ENCODE measurements at regions of chr13 and their contacts with region 1.

Region 1: GRCh38 chr13:25180775-25181537 is 8.9 kb upstream of the AMER2 start:
- DNase-seq: peak; percentile 84
- ATAC-seq: peak; percentile 88
- H3K4me3 ChIP-seq: peak overlapping the region; percentile 34; the same call in 1 of the 2 replicates
- H3K27ac ChIP-seq: peak overlapping the region; percentile 74
- H3K4me1 ChIP-seq: peaks cover 36% of the 10 kb centered on the region
- H3K27me3 ChIP-seq: no peaks in the 10 kb centered on the region
- CTCF ChIP-seq: no peak
- EP300 ChIP-seq: peak; percentile 60 to 71; a peak in 3 of 4 replicates
- POLR2A ChIP-seq: no peak
- RAD21 ChIP-seq: 0 out of 2 replicates have a peak, but pooled peaks have one; percentile 2

Region 2: GRCh38 chr13:25114220-25114619 is 66.7 kb before region 1 on chr13:
- CTCF ChIA-PET with region 1: interaction called, 4 read pairs
- POLR2A ChIA-PET with region 1: interaction called, 4 read pairs
- RAD21 ChIA-PET with region 1: interaction called, 4 read pairs
- SMC1A ChIA-PET with region 1: interaction called, 3 read pairs
- in situ Hi-C with region 1: no loop called
- intact Hi-C with region 1: loop called (anchors 2 kb)
- DNase-seq: peak; percentile 56
- ATAC-seq: peak; percentile 96
- H3K4me3 ChIP-seq: no peak overlapping the region
- H3K27ac ChIP-seq: no peak overlapping the region
- H3K4me1 ChIP-seq: peaks cover 9% of the 10 kb centered on the region
- H3K27me3 ChIP-seq: peaks cover 0 to 3% of the 10 kb centered on the region in 2 experiments; a peak in 1 of 4 replicates
- CTCF ChIP-seq: peak; percentile 88 to 96 (median 90)
- EP300 ChIP-seq: no peak
- POLR2A ChIP-seq: no peak
- RAD21 ChIP-seq: peak; percentile 82

Region 3: GRCh38 chr13:25147638-25148401 is 33.1 kb before region 1 on chr13:
- CTCF ChIA-PET with region 1: no interaction called
- POLR2A ChIA-PET with region 1: no interaction called
- RAD21 ChIA-PET with region 1: no interaction called
- SMC1A ChIA-PET with region 1: no interaction called
- in situ Hi-C with region 1: no loop called
- intact Hi-C with region 1: loop called (anchors 2 kb)
- DNase-seq: peak; percentile 31
- ATAC-seq: peak; percentile 86
- H3K4me3 ChIP-seq: no peak overlapping the region
- H3K27ac ChIP-seq: no peak overlapping the region; the same call in 1 of the 2 replicates
- H3K4me1 ChIP-seq: 0 out of 2 replicates have a peak, but pooled peaks cover 2% of the 10 kb centered on the region
- H3K27me3 ChIP-seq: no peaks in the 10 kb centered on the region
- CTCF ChIP-seq: no peak
- EP300 ChIP-seq: peak in 1 of 2 experiments; percentile 58; a peak in 1 of 4 replicates
- POLR2A ChIP-seq: no peak
- RAD21 ChIP-seq: no peak

Region 4: GRCh38 chr13:25192936-25193335 is 12.0 kb after region 1 on chr13:
- CTCF ChIA-PET with region 1: interaction called, 3 read pairs
- POLR2A ChIA-PET with region 1: interaction called, 5 read pairs
- RAD21 ChIA-PET with region 1: no interaction called
- SMC1A ChIA-PET with region 1: interaction called, 36 read pairs
- in situ Hi-C with region 1: no loop called
- intact Hi-C with region 1: no loop called
- DNase-seq: no peak
- ATAC-seq: no peak
- H3K4me3 ChIP-seq: no peak overlapping the region
- H3K27ac ChIP-seq: no peak overlapping the region
- H3K4me1 ChIP-seq: no peaks in the 10 kb centered on the region
- H3K27me3 ChIP-seq: no peaks in the 10 kb centered on the region
- CTCF ChIP-seq: no peak
- EP300 ChIP-seq: no peak
- POLR2A ChIP-seq: no peak
- RAD21 ChIP-seq: no peak

Region 5: GRCh38 chr13:25232937-25233515 is 52.1 kb after region 1 on chr13:
- CTCF ChIA-PET with region 1: interaction called, 10 read pairs
- POLR2A ChIA-PET with region 1: no interaction called
- RAD21 ChIA-PET with region 1: no interaction called
- SMC1A ChIA-PET with region 1: no interaction called
- in situ Hi-C with region 1: no loop called
- intact Hi-C with region 1: no loop called
- DNase-seq: no peak
- ATAC-seq: peak; percentile 81
- H3K4me3 ChIP-seq: no peak overlapping the region
- H3K27ac ChIP-seq: no peak overlapping the region
- H3K4me1 ChIP-seq: peaks cover 8% of the 10 kb centered on the region; the same call in 1 of the 2 replicates
- H3K27me3 ChIP-seq: no peaks in the 10 kb centered on the region; a peak in 1 of 4 replicates
- CTCF ChIP-seq: peak; percentile 45 to 56 (median 50); a peak in 4 of 6 replicates
- EP300 ChIP-seq: no peak
- POLR2A ChIP-seq: no peak
- RAD21 ChIP-seq: peak; percentile 54

Region 6: GRCh38 chr13:25249001-25249543 is 68.1 kb after region 1 on chr13:
- CTCF ChIA-PET with region 1: interaction called, 4 read pairs
- POLR2A ChIA-PET with region 1: interaction called, 3 read pairs
- RAD21 ChIA-PET with region 1: interaction called, 3 read pairs
- SMC1A ChIA-PET with region 1: interaction called, 3 read pairs
- in situ Hi-C with region 1: no loop called
- intact Hi-C with region 1: loop called (anchors 5 kb)
- DNase-seq: peak; percentile 17
- ATAC-seq: peak; percentile 91
- H3K4me3 ChIP-seq: no peak overlapping the region
- H3K27ac ChIP-seq: peak overlapping the region; percentile 21; the same call in 1 of the 2 replicates
- H3K4me1 ChIP-seq: peaks cover 18% of the 10 kb centered on the region
- H3K27me3 ChIP-seq: no peaks in the 10 kb centered on the region
- CTCF ChIP-seq: peak; percentile 45 to 66 (median 64); a peak in 5 of 6 replicates
- EP300 ChIP-seq: no peak
- POLR2A ChIP-seq: no peak
- RAD21 ChIP-seq: peak; percentile 86

Region 7: DNA sequence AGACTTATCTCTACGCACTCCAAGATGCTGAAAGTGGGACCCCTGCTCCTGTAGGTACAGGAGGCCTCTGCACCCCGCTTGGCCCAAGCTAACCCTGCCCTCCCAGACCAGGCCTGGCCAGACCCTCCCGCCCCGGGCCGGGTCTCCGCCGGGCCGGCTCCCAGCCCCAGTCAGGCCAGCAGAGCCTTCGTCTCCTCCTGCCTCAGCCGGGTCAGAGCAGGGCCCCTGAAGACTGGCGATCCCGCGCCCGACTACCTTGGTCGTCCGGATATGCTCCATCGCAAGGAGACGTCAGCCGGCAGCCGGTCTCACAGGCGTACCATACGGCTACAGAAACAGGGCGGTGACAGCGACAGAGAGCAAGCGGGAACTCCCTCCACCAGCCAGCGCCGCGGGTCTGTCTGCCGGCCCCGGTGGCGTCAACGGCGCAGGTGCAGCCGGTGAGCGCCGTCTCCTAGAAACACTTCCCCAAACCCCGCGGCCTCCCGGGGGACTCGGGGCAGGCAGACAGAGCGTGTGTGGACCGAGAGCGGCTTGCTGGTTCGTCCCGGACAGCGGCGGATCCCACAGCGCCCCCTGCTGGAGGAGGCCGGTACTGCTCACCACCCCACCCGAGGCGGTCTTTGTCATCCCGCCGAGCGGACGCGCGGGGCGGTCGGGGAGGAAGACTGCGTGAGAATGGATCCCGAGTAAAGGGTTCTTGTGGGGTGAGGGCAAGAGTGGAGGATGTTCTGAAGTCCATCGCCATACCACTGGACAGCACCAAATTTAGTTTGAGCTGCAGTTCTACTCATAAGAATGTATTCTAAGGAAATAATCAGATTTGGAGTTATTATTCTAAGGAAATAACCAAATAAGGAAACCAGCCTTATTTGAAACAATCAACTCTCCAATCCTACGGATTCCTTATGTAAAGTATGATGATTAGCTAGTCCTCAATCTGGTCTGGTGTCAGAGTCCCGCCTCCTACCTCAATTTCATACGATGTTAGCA is 106.3 kb after region 1 on chr13 and contains the start of gene MTMR6:
- CTCF ChIA-PET with region 1: interaction called, 3 read pairs
- POLR2A ChIA-PET with region 1: no interaction called
- RAD21 ChIA-PET with region 1: interaction called, 6 read pairs
- SMC1A ChIA-PET with region 1: interaction called, 5 read pairs
- in situ Hi-C with region 1: no loop called
- intact Hi-C with region 1: loop called (anchors 2 kb)
- DNase-seq: peak; percentile 80
- ATAC-seq: peak; percentile 97
- H3K4me3 ChIP-seq: peak within 1 kb of the TSS; percentile 59
- H3K27ac ChIP-seq: peak within 1 kb of the TSS; percentile 95
- H3K4me1 ChIP-seq: peaks cover 2% of the 10 kb centered on the region
- H3K27me3 ChIP-seq: no peaks in the 10 kb centered on the region
- CTCF ChIP-seq: peak; percentile 96 to 99 (median 98); a peak in 5 of 6 replicates
- EP300 ChIP-seq: peak; percentile 4 to 78; a peak in 2 of 4 replicates
- POLR2A ChIP-seq: peak; percentile 86
- RAD21 ChIP-seq: peak; percentile 52
- polyA plus RNA-seq, gene MTMR6: 13.0 to 21.0 TPM

Region 8: DNA sequence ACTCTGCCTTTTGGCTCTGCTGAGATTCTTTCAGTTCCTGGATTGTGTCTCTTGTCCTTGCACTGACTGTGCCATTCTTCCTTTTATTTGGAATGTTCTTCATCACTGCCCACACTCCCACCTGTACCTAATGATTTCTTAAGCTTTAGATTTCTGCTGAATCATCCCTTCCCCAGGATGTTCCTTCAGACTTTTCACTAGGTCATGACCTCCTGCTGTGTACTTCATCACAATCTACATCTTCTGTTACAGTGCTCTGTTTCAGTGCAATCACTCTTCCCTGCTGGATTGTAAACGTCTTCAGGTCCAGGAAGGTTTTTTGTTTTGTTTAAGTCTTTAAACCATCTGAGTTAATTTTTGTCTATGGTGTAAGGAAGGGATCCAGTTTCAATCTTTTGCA is 471.8 kb after region 1 on chr13:
- CTCF ChIA-PET with region 1: no interaction called
- POLR2A ChIA-PET with region 1: no interaction called
- RAD21 ChIA-PET with region 1: no interaction called
- SMC1A ChIA-PET with region 1: no interaction called
- in situ Hi-C with region 1: no loop called
- intact Hi-C with region 1: no loop called
- DNase-seq: no peak
- ATAC-seq: no peak
- H3K4me3 ChIP-seq: no peak overlapping the region
- H3K27ac ChIP-seq: no peak overlapping the region
- H3K4me1 ChIP-seq: no peaks in the 10 kb centered on the region
- H3K27me3 ChIP-seq: no peaks in the 10 kb centered on the region
- CTCF ChIP-seq: no peak
- EP300 ChIP-seq: no peak
- POLR2A ChIP-seq: no peak
- RAD21 ChIP-seq: no peak